A549 (cell line): ENCODE measurements at regions of chr16 and their contacts with region 1.

Region 1: DNA sequence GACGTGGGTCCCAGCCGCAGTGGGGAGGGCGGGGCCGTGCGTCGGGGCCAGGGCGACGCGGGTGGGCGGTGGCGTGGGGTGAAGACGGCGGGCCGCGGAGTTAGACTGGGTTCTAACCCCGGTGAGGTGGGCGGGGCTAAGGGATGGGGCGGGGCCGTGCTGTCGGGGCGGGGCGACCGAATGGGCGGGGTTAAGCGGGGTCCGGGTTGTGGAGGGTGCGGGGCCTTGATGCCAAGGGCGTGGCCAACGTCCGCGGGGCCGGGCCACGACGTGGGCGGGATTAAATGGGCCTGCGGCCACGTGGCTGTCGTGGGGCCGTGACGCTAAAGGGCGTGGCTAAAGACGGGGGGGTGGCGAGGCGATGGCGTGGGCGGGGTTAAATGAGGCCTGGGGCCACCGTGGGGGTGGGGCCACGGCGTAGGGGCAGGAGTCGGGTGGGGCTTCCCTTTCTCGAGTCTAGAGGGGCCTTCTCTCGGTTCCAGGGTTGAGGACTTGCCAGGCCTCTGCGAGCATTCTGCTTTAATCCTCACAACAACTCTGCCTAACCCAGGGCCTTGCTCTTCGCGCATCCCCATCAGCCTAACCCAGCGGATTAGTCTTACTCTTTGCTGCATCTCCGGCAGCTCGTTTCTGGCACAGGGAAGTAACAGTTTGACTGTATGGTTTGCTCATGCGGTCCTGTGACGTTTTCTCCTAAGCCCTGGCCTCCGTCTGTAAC is 739 bp downstream of the TCF25 start:
- DNase-seq: peak; percentile 77 to 98
- ATAC-seq: peak; percentile 62 to 82
- H3K4me3 ChIP-seq: peak overlapping the region; percentile 85
- H3K27ac ChIP-seq: peak overlapping the region; percentile 96 to 99
- H3K4me1 ChIP-seq: peaks cover 12% of the 10 kb centered on the region; the same call in 1 of the 3 replicates
- CTCF ChIP-seq: no peak
- EP300 ChIP-seq: no peak
- POLR2A ChIP-seq: no peak
- RAD21 ChIP-seq: no peak

Region 2: GRCh38 chr16:89460553-89460952 is 413.6 kb before region 1 on chr16:
- CTCF ChIA-PET with region 1: no interaction called
- POLR2A ChIA-PET with region 1: no interaction called
- DNase-seq: no peak
- ATAC-seq: 0 out of 6 replicates have a peak, but pooled peaks of 1 of the 2 experiments have one; percentile 54
- H3K4me3 ChIP-seq: no peak overlapping the region
- H3K27ac ChIP-seq: no peak overlapping the region
- H3K4me1 ChIP-seq: peaks cover 46% of the 10 kb centered on the region
- CTCF ChIP-seq: no peak
- EP300 ChIP-seq: no peak
- POLR2A ChIP-seq: no peak
- RAD21 ChIP-seq: no peak

Region 3: DNA sequence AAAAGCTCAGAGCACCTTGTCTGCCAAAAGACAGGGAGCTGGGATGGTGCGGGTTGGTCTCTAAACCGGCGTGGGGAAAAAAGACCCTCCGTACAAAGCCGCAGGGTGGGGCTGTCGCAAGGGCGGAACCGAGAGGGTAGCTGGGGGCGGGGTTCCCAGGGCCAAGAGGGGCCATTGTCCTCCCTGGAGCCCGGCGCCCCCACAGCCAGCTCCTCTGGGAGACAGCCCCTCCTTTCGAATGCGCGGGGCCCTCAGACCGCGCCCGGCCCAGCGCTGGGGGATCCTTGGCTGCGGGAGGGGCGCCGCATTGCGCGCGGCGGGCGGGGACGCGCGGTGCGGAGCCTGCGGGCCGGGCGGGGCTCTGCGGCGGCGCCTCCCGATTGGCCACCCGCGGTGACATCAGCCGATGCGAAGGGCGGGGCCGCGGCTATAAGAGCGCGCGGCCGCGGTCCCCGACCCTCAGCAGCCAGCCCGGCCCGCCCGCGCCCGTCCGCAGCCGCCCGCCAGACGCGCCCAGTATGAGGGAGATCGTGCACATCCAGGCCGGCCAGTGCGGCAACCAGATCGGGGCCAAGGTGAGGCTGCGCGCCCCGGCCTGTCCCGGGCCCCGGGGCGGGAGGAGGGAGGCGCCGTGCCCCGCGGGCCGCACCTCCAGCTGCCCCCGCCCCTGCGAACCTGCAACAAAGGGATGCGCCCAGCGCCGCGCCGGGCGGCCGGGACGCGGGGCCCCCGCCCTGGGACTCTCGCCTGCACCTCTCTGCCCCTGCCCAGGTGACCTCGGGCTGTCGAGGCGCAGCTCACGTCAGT is 49.0 kb after region 1 on chr16 and contains the start of gene TUBB3:
- CTCF ChIA-PET with region 1: interaction called, 7 read pairs
- POLR2A ChIA-PET with region 1: interaction called, 34 read pairs
- DNase-seq: peak; percentile 80 to 94
- ATAC-seq: peak; percentile 15 to 24
- H3K4me3 ChIP-seq: peak within 1 kb of the TSS; percentile 83
- H3K27ac ChIP-seq: peak within 1 kb of the TSS; percentile 98 to 99
- H3K4me1 ChIP-seq: peaks cover 53% of the 10 kb centered on the region
- CTCF ChIP-seq: no peak
- EP300 ChIP-seq: no peak
- POLR2A ChIP-seq: peak; percentile 99
- RAD21 ChIP-seq: no peak
- polyA plus RNA-seq, gene TUBB3: 48.8 and 48.9 TPM in 2 replicates